WTC11 (cell line): ENCODE measurements at regions of chr22 and their contacts with region 1.

Region 1: DNA sequence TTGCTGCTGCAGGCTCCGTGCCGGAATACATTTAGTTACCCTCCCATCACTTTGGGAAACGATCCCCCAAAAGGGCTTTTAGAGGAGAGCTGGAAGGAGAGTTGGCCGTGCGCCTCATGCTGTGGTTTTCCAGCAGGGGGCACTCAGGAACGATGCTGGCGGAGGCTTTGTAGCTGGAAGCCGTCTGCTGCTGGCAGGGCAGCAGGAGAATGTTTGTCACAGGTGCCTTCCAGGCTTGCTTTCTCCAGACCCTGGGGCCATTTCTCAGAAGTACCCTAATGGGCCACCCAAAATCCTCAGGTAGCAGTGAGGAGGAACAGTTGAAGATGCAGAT is 30.0 kb upstream of the CABP7 start:
- DNase-seq: peak; percentile 86
- ATAC-seq: peak; percentile 70
- H3K4me3 Mint-ChIP-seq: no peak overlapping the region
- H3K27ac Mint-ChIP-seq: peak overlapping the region; percentile 85
- H3K4me1 Mint-ChIP-seq: peaks cover 51% of the 10 kb centered on the region
- H3K27me3 Mint-ChIP-seq: no peaks in the 10 kb centered on the region
- CTCF ChIP-seq: peak; percentile 47

Region 2: DNA sequence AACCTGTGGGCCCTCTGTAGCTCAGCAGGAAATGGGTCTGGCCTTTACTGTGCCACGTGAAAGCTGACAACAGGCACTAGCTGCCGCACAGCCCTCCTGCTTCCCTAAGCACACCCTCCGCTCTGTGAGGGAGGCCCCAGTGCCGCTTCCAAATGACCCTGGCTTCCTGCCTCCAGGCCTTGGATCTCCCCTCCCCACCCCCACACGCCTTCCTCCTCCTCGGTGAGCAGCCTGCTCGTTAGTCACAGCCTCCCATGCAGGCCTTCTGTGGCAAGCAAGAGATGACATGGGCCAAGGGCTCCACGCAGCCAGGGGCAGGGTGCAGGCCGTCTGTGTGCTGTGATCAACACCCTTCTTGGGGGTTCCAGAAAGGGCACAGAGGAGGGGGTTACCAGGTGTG is 359.1 kb before region 1 on chr22:
- CTCF ChIA-PET with region 1: no interaction called
- POLR2A ChIA-PET with region 1: no interaction called
- DNase-seq: no peak
- ATAC-seq: peak; percentile 20
- H3K4me3 Mint-ChIP-seq: no peak overlapping the region
- H3K27ac Mint-ChIP-seq: no peak overlapping the region
- H3K4me1 Mint-ChIP-seq: no peaks in the 10 kb centered on the region
- H3K27me3 Mint-ChIP-seq: no peaks in the 10 kb centered on the region
- CTCF ChIP-seq: no peak

Region 3: GRCh38 chr22:29625090-29625825 is 64.6 kb before region 1 on chr22:
- CTCF ChIA-PET with region 1: interaction called, 12 read pairs
- POLR2A ChIA-PET with region 1: no interaction called
- DNase-seq: peak; percentile 34
- ATAC-seq: peak; percentile 53
- H3K4me3 Mint-ChIP-seq: no peak overlapping the region
- H3K27ac Mint-ChIP-seq: peak overlapping the region; percentile 85
- H3K4me1 Mint-ChIP-seq: peaks cover 52% of the 10 kb centered on the region
- H3K27me3 Mint-ChIP-seq: no peaks in the 10 kb centered on the region
- CTCF ChIP-seq: peak; percentile 67

Region 4: GRCh38 chr22:29670626-29671025 is 19.2 kb before region 1 on chr22:
- CTCF ChIA-PET with region 1: interaction called, 11 read pairs
- POLR2A ChIA-PET with region 1: no interaction called
- DNase-seq: no peak
- ATAC-seq: no peak
- H3K4me3 Mint-ChIP-seq: no peak overlapping the region
- H3K27ac Mint-ChIP-seq: peak overlapping the region; percentile 70
- H3K4me1 Mint-ChIP-seq: no peaks in the 10 kb centered on the region
- H3K27me3 Mint-ChIP-seq: no peaks in the 10 kb centered on the region
- CTCF ChIP-seq: no peak

Region 5: DNA sequence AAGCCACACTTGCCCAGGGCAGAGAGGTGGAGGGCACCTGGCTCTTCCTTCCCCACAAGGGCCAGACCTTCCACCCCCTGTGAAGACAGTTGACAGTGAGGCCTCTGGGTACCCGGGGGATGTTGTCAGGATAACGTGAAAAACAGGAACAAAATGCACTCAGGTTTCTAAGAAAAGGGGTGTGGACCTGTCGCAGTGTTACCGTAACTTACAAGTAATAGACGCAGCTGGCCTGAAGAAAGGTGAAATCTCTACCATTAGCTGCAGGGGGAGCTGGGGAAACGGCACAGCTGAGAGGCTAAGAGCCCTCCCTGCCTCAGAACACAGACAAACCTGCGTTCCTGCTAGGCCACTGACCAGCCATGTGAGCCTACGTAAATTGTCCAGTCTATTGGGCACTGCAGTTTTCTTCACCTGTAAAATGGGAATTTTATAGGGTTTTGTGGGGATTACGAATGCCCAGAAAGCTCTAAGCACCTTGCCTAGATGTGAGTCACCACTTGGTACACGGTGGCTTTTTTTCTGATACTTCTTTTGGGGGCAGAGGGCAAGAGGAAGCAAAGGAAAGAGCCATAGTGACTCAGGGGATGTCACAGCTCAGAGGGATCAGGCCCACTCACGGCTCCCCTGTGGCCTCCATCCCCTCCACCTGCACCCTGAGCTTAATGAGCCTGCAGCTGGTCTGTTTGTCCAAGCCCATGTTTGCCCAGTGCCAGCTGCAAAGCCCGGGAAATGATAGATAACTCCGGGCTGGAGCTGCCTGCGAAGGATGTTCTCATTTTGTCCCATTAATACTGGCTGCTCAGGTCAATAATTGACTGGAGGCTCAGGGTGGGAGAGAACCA is 11.5 kb after region 1 on chr22:
- CTCF ChIA-PET with region 1: interaction called, 105 read pairs
- POLR2A ChIA-PET with region 1: interaction called, 3 read pairs
- DNase-seq: peak; percentile 52
- ATAC-seq: peak; percentile 56
- H3K4me3 Mint-ChIP-seq: no peak overlapping the region
- H3K27ac Mint-ChIP-seq: no peak overlapping the region
- H3K4me1 Mint-ChIP-seq: peaks cover 43% of the 10 kb centered on the region
- H3K27me3 Mint-ChIP-seq: peaks cover 37% of the 10 kb centered on the region
- CTCF ChIP-seq: no peak

Region 6: DNA sequence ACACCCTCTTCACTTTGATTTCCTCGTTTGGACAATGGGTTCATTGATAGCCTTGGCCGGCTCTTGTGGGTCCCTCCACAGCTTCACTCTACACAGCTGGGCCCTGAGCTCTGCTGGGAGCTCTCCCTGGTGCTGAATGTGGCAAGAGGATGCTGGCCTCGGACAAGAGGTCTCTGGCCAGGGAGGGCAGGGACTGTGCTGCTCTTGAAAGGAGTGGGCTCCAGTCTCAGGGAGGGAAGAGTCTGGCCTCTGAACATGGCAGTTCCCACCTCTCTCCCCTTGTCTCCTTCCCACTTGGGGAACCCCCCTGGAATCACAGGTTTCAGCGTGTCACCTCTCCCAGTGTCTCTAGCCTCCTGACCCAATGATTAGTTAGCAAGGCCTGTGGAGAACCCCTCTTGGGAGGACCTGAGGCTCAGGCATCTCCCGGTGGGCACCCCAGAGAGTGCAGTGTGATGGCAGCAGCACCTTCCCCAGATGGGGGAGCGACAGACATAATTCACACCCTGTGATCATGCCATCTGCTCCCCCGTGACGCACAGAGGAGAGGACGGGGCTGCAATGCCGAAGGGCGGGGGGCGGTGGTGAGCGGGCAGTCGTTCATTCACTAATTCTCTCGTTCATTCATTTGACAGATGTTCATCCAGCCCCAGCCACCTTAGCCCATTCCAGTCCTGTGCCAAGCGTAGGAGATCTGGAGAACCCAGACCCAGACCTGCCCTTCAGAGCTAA is 27.1 kb after region 1 on chr22:
- CTCF ChIA-PET with region 1: interaction called, 57 read pairs
- POLR2A ChIA-PET with region 1: no interaction called
- DNase-seq: peak; percentile 89
- ATAC-seq: peak; percentile 79
- H3K4me3 Mint-ChIP-seq: no peak overlapping the region
- H3K27ac Mint-ChIP-seq: no peak overlapping the region
- H3K4me1 Mint-ChIP-seq: peaks cover 3% of the 10 kb centered on the region; the same call in 1 of the 2 replicates
- H3K27me3 Mint-ChIP-seq: peaks cover 50% of the 10 kb centered on the region
- CTCF ChIP-seq: no peak

Region 7: DNA sequence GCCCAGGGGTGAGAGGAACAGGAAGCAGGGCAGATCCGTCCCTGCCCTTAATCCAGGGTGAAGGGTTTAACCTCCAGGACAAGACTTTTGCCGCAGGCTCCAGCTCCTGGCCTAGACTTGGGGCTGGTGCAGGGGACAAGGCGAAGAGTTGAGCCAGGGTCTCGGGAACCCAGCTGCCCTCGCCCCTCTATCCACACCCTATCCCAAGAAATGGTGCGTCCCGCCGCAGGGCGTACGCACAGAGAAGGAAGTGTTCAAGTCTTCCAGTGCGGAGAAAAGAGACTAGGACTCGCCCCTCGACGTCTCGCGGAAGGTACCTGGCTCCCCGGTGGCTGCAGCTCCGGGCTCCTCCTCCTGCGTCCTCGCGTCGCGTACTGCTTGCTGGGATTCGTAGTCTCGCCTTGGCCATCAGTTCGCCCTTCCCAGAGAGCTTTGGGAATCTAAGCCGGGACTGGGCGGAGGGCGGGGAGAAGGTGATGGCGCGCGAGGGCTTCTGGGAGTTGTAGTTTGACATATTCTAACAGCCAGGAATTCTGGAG is 76.9 kb after region 1 on chr22 and contains the start of gene ZMAT5:
- CTCF ChIA-PET with region 1: interaction called, 12 read pairs
- POLR2A ChIA-PET with region 1: no interaction called
- DNase-seq: peak; percentile 96
- ATAC-seq: peak; percentile 98
- H3K4me3 Mint-ChIP-seq: peak within 1 kb of the TSS; percentile 100
- H3K27ac Mint-ChIP-seq: peak within 1 kb of the TSS; percentile 100
- H3K4me1 Mint-ChIP-seq: peaks cover 14% of the 10 kb centered on the region
- H3K27me3 Mint-ChIP-seq: no peaks in the 10 kb centered on the region
- CTCF ChIP-seq: no peak
- total RNA-seq, gene ZMAT5: 13.4 to 17.3 TPM (median 17.2 TPM) in 3 replicates

Region 8: GRCh38 chr22:29937940-29938693 is 248.3 kb after region 1 on chr22:
- CTCF ChIA-PET with region 1: no interaction called
- POLR2A ChIA-PET with region 1: no interaction called
- DNase-seq: no peak
- ATAC-seq: no peak
- H3K4me3 Mint-ChIP-seq: no peak overlapping the region
- H3K27ac Mint-ChIP-seq: no peak overlapping the region
- H3K4me1 Mint-ChIP-seq: peaks cover 12% of the 10 kb centered on the region; the same call in 1 of the 2 replicates
- H3K27me3 Mint-ChIP-seq: no peaks in the 10 kb centered on the region
- CTCF ChIP-seq: no peak